ENCODE measurements at regions of chr11 and their contacts with region 1.

Region 1: GRCh38 chr11:76807206-76807875 is 24.2 kb downstream of the TSKU start:
- DNase-seq: no peak
- H3K4me3 ChIP-seq: no peak overlapping the region
- CTCF ChIP-seq: peak; percentile 83

Region 2: GRCh38 chr11:76823481-76824078 is 16.2 kb after region 1 on chr11:
- CTCF ChIA-PET with region 1: interaction called, 54 read pairs
- POLR2A ChIA-PET with region 1: no interaction called
- DNase-seq: no peak
- H3K4me3 ChIP-seq: no peak overlapping the region
- CTCF ChIP-seq: no peak

Region 3: GRCh38 chr11:76835928-76836612 is 28.7 kb after region 1 on chr11:
- CTCF ChIA-PET with region 1: interaction called, 16 read pairs
- POLR2A ChIA-PET with region 1: no interaction called
- DNase-seq: no peak
- H3K4me3 ChIP-seq: no peak overlapping the region
- CTCF ChIP-seq: no peak

Measured in AG04449 (cell line).